ENCODE measurements at regions of chr18 and their contacts with region 1.

Region 1: DNA sequence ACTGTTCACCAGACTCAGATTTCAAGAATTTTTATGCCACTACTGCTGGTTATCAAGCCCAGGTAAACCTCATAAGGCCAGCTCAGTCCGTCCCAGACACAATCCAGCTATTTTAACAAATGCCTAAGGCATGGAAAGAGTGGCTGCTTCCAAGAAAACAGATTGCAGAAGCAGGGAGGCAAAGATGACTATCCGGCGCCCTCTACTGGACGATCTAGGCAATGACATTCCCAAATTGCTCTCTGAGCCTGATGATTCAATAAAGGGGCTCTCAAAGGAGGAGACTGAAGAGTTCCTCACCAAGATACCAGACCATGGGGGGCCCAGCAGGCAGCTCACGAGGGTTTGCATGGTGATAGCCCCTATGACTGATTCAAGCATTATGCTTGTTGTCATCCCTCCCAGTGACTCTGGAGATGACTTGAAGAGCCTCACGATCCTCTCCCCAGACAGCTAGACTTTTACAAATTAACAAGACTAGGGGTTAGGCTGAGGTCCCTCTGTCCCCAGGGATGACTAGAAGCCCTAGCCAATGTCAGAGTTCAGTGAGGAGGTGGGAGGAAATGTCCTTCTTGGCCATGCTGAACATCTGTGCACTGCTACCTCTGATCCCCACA is 25.0 kb downstream of the SERPINB8 start:
- DNase-seq: peak; percentile 14
- H3K4me3 ChIP-seq: no peak overlapping the region
- H3K27me3 ChIP-seq: no peaks in the 10 kb centered on the region
- CTCF ChIP-seq: peak; percentile 90

Region 2: GRCh38 chr18:63979409-63979920 is 15.4 kb before region 1 on chr18:
- CTCF ChIA-PET with region 1: interaction called, 27 read pairs
- POLR2A ChIA-PET with region 1: no interaction called
- DNase-seq: peak; percentile 17
- H3K4me3 ChIP-seq: peak overlapping the region; percentile 7
- H3K27me3 ChIP-seq: no peaks in the 10 kb centered on the region
- CTCF ChIP-seq: peak; percentile 94

Region 3: DNA sequence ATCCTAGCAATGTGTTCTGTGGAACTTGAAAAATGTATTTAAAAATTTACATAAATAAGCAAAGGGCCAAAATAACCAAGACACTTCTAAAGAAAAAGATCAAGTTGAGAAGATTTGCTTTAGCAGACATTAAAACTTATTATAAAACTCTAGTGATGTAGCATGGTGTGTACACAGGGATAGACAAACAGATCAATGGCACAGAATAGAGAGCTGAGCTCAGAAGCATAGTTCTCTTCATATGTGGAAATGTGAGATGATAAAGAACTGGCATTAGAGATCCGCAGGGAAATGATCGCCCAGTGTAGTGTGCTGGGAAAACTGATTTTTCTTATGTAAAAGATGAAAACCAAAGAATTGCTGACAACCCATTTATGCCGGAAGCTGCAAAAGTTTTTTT is 14.4 kb after region 1 on chr18:
- CTCF ChIA-PET with region 1: interaction called, 48 read pairs
- POLR2A ChIA-PET with region 1: no interaction called
- DNase-seq: no peak
- H3K4me3 ChIP-seq: no peak overlapping the region
- H3K27me3 ChIP-seq: no peaks in the 10 kb centered on the region
- CTCF ChIP-seq: no peak

Measured in BJ (cell line).